GM23248 (cell line): ENCODE measurements at regions of chr4 and their contacts with region 1.

Region 1: GRCh38 chr4:47562297-47562696 is 77.2 kb downstream of the ATP10D start:
- DNase-seq: no peak
- H3K4me3 ChIP-seq: no peak overlapping the region
- H3K27ac ChIP-seq: no peak overlapping the region
- H3K4me1 ChIP-seq: peaks cover 21% of the 10 kb centered on the region
- H3K27me3 ChIP-seq: no peaks in the 10 kb centered on the region

Region 2: GRCh38 chr4:47391256-47391655 is 171.0 kb before region 1 on chr4:
- in situ Hi-C with region 1: loop called (anchors 10 kb)
- DNase-seq: no peak
- H3K4me3 ChIP-seq: no peak overlapping the region
- H3K27ac ChIP-seq: no peak overlapping the region
- H3K4me1 ChIP-seq: no peaks in the 10 kb centered on the region
- H3K27me3 ChIP-seq: peaks cover 9% of the 10 kb centered on the region